Left cardiac atrium (tissue), 4 donors: ENCODE measurements at regions of chr2 and their contacts with region 1.

Region 1: DNA sequence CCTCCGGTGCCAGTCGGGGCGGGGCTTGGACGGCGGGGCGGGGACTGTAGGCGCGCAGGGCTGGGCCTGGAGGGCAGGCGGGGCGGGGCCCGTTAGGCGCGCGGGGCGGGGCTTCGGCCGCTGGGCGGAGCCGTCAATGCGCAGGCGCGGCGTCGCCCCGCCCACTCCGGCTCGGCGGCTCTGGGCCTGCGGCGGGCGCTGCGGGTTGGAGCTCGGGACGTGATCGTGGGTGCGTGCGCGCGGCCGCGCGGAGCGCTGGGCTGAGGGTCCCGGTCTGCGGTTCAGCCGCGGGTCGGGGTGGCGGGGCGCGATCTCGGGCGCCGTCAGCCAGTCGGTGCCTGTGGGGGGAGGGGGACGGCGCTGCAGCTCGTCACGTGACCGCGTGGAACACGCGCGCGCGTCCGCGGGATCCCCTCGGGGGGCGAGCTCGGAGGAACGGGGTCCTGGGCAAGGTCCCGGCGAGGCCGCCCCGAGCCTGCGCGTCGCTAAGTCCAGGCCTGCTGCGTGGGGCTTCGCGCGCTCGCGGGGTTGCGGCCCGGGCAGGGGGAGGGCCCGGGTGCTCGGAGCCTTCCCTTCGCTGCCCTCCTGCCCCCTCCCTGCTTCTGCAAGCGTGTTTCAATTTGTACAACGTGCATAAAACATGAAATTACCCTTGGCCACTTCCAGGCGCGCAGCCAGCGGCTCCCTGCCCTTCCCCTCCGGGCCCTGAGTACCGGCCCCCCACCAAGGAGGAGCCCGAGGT is at the start of gene D2HGDH:
- DNase-seq: peak; percentile 96
- ATAC-seq: peak; percentile 95 to 97
- total RNA-seq, gene D2HGDH: 14.6 to 16.9 TPM

Region 2: GRCh38 chr2:241859436-241860183 is 125.0 kb after region 1 on chr2:
- intact Hi-C with region 1: loop called in 1 of 2 experiments (anchors 5 kb)
- DNase-seq: peak; percentile 80
- ATAC-seq: peak; percentile 66 to 72

Region 3: GRCh38 chr2:241865957-241866789 is 131.5 kb after region 1 on chr2:
- intact Hi-C with region 1: loop called (anchors 5 kb)
- DNase-seq: no peak
- ATAC-seq: peak in 1 of 2 donors; percentile 8